Activated naive CD4-positive, alpha-beta T cell treated with anti-CD3 and anti-CD28 coated beads for 36 hours (primary cell): ENCODE measurements at regions of chr17 and their contacts with region 1.

Region 1: DNA sequence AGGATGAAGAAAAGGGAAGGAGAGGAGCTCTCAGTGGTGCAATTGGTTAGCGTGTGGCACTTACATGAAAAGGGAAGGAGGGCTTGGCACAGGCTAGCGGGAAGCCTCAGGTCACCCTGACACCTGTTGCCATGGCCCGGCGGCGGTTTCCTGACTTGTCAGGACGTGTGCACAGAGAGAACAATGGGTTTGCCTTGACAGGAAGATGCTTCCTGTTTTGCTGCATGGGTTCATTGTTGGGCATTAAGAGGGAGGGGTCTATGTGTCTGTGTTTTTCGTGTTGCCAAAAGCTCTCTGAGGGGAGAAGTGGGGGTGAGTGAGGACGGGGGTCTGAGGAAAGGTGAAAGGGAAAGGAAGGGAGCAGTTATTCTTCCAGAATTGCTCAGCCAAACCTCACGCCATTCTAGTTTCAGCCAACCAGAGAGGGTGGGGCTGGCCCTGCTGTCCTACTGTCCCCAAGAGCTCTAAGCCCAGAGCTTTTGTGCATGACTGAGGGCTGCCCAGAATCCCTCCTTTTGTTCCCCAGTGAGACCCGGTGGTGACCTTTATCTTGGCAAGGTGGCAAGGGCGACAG is 17.1 kb upstream of the CCR7 start:
- DNase-seq: peak; percentile 92
- H3K4me3 Mint-ChIP-seq: peak overlapping the region; percentile 45
- H3K27ac Mint-ChIP-seq: peak overlapping the region; percentile 71
- H3K4me1 Mint-ChIP-seq: peaks cover 86% of the 10 kb centered on the region
- H3K27me3 Mint-ChIP-seq: no peaks in the 10 kb centered on the region

Region 2: DNA sequence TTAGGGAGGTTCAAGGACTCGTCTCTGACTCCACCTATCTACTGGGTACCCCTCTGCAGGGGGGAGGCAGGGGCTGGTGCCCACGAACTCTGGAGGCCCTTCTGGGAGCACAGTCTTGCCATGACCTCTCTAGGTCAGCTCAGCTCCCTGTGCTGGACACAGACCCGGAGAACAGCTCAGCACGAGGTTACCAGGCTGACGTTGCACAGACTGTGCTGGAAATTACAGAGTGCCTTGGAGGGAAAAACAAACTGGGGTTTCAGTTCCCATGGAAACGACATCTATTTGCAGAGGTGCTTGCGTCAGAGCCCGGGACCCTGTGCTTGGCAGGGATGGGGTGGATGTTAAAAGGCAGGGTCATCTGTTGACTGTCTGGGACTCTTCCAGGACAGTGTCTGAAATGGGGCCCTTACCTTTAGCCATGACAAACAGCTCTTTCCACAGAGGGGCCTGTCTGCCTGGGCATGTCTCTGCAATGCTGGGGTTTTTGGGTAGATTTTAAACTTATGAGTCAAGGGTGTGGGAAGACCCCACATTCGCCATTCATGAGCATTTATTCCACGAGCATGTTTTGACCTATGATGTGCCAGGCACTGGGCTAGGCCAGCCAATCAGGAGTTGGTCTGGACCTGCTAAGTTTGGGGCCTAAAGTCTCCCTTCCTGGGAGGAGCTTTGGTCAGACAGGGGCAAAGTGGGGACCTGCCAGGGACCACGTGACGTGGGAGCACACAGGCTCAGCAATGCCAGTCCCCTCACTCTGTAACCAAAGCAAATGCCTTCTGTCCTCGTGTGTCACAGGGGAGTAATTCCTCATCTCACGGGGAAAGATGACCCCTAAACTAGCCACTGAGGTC is 39.6 kb before region 1 on chr17:
- CTCF ChIA-PET with region 1: interaction called, 7 read pairs
- intact Hi-C with region 1: loop called (anchors 1 kb)
- DNase-seq: peak; percentile 89
- H3K4me3 Mint-ChIP-seq: peak overlapping the region; percentile 66
- H3K27ac Mint-ChIP-seq: peak overlapping the region; percentile 96
- H3K4me1 Mint-ChIP-seq: peaks cover 83% of the 10 kb centered on the region
- H3K27me3 Mint-ChIP-seq: no peaks in the 10 kb centered on the region

Region 3: GRCh38 chr17:40553694-40554534 is 28.5 kb before region 1 on chr17:
- CTCF ChIA-PET with region 1: no interaction called
- intact Hi-C with region 1: no loop called
- DNase-seq: peak; percentile 59
- H3K4me3 Mint-ChIP-seq: peak overlapping the region; percentile 57
- H3K27ac Mint-ChIP-seq: peak overlapping the region; percentile 89
- H3K4me1 Mint-ChIP-seq: peaks cover 98% of the 10 kb centered on the region
- H3K27me3 Mint-ChIP-seq: no peaks in the 10 kb centered on the region

Region 4: GRCh38 chr17:40564883-40565768 is 17.3 kb before region 1 on chr17 and contains the start of gene CCR7:
- CTCF ChIA-PET with region 1: interaction called, 31 read pairs
- intact Hi-C with region 1: loop called (anchors 1 kb)
- DNase-seq: peak; percentile 92
- H3K4me3 Mint-ChIP-seq: peak within 1 kb of the TSS; percentile 96
- H3K27ac Mint-ChIP-seq: peak within 1 kb of the TSS; percentile 100
- H3K4me1 Mint-ChIP-seq: peaks cover 56% of the 10 kb centered on the region
- H3K27me3 Mint-ChIP-seq: no peaks in the 10 kb centered on the region
- total RNA-seq, gene CCR7: 150 to 156 TPM

Region 5: GRCh38 chr17:40598663-40599467 is 16.4 kb after region 1 on chr17:
- CTCF ChIA-PET with region 1: interaction called, 5 read pairs
- intact Hi-C with region 1: loop called (anchors 1 kb)
- DNase-seq: peak; percentile 90
- H3K4me3 Mint-ChIP-seq: peak overlapping the region; percentile 67
- H3K27ac Mint-ChIP-seq: peak overlapping the region; percentile 98
- H3K4me1 Mint-ChIP-seq: peaks cover 95% of the 10 kb centered on the region
- H3K27me3 Mint-ChIP-seq: no peaks in the 10 kb centered on the region

Region 6: GRCh38 chr17:40608061-40608588 is 25.7 kb after region 1 on chr17:
- CTCF ChIA-PET with region 1: interaction called, 5 read pairs
- intact Hi-C with region 1: loop called (anchors 1 kb)
- DNase-seq: peak; percentile 64
- H3K4me3 Mint-ChIP-seq: peak overlapping the region; percentile 38
- H3K27ac Mint-ChIP-seq: peak overlapping the region; percentile 73
- H3K4me1 Mint-ChIP-seq: peaks cover 95% of the 10 kb centered on the region
- H3K27me3 Mint-ChIP-seq: no peaks in the 10 kb centered on the region